ENCODE measurements at regions of chr18 and their contacts with region 1.

Region 1: GRCh38 chr18:36608107-36608506 is 220.7 kb downstream of the TPGS2 start:
- DNase-seq: no peak
- ATAC-seq: no peak

Region 2: DNA sequence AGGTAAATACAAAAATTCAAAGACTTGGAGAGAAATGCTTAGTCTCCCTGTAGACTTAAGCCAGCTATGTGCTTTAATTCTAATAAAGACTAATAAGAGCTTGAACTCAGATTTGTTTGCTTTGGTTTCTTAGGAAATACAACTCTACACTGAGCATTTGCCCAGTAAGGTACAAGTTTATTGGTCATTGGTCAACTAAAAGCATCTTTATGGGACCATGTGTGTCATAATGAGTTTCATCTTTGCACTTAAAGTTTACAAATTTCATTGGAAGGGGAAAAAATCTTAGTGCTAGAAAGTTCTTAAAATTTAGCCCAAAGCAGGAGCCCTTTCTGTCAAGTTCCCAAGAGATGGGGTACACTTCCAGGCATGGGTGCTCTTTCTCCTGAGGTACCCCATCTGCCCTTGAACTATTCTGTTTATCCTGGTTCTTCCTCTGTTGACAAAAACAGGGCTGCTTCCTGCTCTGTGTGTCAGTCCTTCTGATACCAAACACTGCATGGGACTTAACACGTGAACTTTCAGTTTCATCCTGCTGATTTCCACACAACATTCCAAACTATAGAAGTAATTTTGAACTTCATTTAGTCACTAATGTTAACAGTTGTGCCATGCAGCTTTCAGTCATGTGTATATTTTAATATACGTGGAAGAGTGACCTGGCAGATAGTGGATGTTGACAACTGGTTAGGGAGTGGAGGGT is 20.5 kb after region 1 on chr18:
- intact Hi-C with region 1: loop called (anchors 2 kb)
- DNase-seq: no peak
- ATAC-seq: peak; percentile 4

Measured in Right ventricle myocardium inferior (tissue), 1 donor.